BJ (cell line): ENCODE measurements at regions of chr12 and their contacts with region 1.

Region 1: DNA sequence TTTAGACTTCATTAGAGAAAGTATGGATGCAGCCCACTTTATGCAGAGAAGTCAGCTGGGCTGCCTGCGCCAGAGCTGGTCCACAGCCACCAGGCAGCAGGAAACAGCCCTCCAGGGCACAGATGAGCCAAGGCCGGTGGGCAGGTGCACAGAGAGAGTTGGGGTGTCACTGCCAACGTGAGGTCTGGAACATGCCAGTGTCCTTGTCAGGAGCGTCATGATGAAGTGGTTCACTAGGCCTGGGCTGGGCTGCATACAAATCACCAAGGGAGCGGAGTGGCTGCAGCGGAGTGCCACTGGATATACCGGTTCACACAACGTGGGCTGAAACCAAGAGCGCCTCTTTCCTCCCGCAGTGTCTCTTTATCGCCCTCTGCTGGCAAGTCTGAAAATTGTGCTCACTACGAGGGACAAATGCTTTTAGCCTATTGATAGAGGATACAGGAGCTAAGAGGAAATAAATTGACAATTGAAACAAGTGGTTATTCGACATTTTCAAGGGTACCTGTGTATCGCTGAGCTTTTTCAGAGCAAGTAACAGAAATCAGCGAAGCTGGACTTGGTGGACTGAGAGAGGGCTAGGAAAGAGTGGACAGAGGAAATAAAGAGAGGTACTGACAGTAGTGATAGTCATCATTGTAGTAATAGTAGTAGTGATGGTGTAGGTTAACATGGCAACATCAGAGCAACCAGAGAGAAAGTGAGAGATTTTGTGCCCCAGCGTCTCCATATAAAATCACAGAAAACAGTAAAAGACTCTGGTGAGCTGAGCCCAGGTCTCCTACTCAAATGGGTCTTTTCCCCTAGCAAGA is 52.0 kb upstream of the ITPR2 start:
- DNase-seq: no peak
- H3K4me3 ChIP-seq: no peak overlapping the region
- H3K27me3 ChIP-seq: no peaks in the 10 kb centered on the region
- CTCF ChIP-seq: peak; percentile 93

Region 2: DNA sequence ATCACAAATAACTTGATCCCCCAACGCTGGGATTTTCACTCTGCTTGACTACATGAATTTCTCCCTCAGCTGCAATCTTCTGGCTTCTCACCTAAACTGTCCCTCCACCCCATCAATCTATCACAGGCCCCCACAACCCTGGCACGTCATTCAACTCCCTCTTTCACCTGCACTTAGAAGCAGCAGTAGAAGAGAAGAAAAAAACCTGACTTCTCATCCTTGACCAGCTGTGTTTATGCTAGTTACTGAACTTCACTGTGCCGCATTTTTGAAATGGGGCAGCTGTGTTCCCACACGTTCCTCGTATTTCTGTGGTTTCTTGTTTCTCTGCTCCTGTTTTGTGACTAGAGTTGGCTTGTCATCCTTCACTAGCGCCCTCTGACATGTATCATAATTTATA is 86.9 kb before region 1 on chr12:
- CTCF ChIA-PET with region 1: no interaction called
- POLR2A ChIA-PET with region 1: no interaction called
- DNase-seq: peak; percentile 35
- H3K4me3 ChIP-seq: no peak overlapping the region
- H3K27me3 ChIP-seq: no peaks in the 10 kb centered on the region
- CTCF ChIP-seq: no peak

Region 3: DNA sequence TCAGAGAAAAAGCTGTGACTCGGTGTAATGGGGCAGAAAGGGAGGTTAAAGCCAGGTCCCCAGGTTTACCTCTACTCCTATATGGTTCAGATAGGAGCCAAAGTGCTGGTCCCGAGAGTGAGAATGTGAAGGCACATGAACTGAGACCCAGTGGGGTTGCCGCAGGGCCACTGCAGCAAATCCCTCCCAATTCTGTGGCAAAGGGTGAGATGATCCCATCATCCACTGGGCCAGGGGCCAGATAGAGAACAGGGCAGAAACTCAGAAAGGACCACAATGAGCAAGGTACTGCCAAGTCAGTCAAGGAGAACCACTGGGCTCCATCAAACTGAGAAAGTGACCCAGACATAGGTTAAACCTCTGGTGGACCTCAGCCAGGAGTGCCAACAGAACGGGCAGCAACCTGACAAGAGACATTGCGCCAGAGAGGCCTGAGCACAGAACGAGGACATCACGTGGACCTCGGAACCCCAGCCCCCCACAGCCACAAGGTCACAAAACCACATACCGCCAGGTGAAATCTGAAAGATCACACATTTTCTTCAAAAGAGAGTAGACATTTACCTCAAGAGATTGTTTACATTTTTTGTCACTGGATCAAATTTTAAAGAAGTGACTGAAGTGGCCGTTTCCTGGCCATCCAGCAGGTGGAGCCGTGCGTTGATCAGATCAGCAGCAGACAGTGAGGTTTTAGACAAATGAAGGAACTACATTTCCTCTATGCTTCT is 31.5 kb before region 1 on chr12:
- CTCF ChIA-PET with region 1: interaction called, 21 read pairs
- POLR2A ChIA-PET with region 1: no interaction called
- DNase-seq: no peak
- H3K4me3 ChIP-seq: no peak overlapping the region
- H3K27me3 ChIP-seq: peaks cover 7% of the 10 kb centered on the region
- CTCF ChIP-seq: peak; percentile 89

Region 4: DNA sequence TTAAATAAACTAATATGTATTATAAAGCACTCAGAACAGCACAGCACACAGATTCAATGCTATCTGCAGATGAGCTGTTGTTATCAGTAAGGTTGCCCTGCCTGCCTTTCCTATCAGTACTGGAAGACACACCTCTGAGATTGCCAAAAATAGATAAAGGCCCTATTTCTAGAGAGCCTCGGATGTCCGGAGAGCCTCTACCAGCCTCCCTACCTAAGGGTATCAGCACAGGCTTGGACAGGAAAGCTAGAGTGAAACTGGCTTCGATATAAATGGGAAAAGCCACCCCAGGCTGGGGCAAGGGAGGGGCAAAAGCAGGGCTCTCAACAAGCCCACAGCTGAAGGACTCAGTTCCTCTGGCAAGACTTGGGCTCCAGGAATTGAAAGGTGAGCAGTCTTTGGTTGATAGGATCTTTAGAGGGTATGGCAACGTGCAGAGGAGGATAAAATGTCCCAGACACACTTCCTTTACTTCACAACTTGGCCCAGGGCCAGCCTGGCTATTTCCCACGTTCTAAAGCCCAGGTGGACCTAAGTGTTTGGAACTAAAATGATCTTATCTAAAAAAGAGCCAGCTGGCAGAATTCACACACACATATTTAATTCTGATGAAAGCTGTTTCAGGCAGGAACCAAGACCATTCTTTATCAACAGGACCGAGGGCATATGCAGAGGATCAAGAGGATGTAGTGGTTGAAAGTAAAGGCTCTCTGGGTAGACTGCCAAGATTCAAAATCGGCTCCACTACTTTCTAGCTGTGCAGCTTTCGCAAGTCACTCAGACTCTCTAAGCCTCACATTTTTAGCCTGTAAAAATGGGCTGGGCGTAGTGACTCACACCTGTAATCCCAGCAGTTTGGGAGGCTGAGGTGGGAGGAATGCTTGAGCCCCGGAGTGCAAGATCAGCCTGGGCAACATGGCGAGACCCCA is 14.2 kb before region 1 on chr12:
- CTCF ChIA-PET with region 1: interaction called, 25 read pairs
- POLR2A ChIA-PET with region 1: no interaction called
- DNase-seq: no peak
- H3K4me3 ChIP-seq: no peak overlapping the region
- H3K27me3 ChIP-seq: peaks cover 4% of the 10 kb centered on the region
- CTCF ChIP-seq: no peak

Region 5: DNA sequence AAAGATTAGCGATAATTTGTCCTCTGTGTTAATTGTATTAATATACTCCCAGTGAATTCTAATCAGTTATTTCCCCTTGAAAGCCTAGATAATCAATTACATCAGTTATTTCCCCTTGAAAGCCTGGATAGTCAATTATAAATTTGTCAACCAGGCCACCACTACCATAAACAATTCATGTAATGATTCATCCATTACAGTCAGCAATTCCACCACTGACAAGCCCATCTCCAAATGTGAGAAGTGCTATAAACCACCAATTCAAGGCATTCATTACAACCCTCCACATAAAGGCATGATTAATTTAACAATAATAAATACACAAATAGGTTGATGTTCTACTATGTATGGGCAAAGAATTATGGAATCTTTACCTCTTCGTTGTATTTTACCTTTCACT is 11.9 kb after region 1 on chr12:
- CTCF ChIA-PET with region 1: interaction called, 23 read pairs
- POLR2A ChIA-PET with region 1: no interaction called
- DNase-seq: no peak
- H3K4me3 ChIP-seq: no peak overlapping the region
- H3K27me3 ChIP-seq: no peaks in the 10 kb centered on the region
- CTCF ChIP-seq: no peak